HepG2 (cell line): ENCODE measurements at regions of chr4 and their contacts with region 1.

Region 1: GRCh38 chr4:118034053-118034785 is at the start of gene NDST3:
- DNase-seq: peak; percentile 32
- ATAC-seq: peak; percentile 61
- H3K4me3 ChIP-seq: peak within 1 kb of the TSS; percentile 26 to 63 (median 31); a peak in 4 of 6 replicates
- H3K27ac ChIP-seq: no peak within 1 kb of the TSS
- H3K4me1 ChIP-seq: no peaks in the 10 kb centered on the region
- H3K27me3 ChIP-seq: peaks cover 1 to 19% of the 10 kb centered on the region in 2 experiments; a peak in 3 of 5 replicates
- CTCF ChIP-seq: peak; percentile 52
- EP300 ChIP-seq: no peak
- POLR2A ChIP-seq: no peak
- RAD21 ChIP-seq: no peak
- total RNA-seq, gene NDST3: not detected in 2 replicates

Region 2: DNA sequence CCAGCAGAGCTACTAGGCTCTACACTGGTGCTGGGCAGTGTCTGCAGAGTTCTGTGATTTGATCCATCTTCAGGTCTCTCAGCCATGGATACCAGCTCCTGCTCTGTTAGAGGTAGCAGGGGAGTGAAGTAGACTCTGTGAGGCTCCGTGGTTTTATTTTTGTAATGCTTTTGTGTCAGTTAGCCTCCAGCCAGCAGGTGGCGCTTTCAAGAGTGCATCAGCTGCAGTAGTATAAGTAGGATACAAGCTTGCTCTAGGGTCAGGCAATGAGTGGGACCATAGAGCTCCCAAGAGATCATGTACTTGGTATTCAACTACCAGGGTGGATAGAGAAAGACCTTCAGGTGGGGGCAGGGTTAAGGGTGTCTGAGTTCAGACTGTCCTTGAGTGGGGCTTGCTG is 586.3 kb before region 1 on chr4:
- CTCF ChIA-PET with region 1: no interaction called
- POLR2A ChIA-PET with region 1: no interaction called
- in situ Hi-C with region 1: no loop called
- intact Hi-C with region 1: loop called (anchors 5 kb)
- DNase-seq: peak; percentile 12
- ATAC-seq: peak; percentile 62; the same call in 2 of the 3 replicates
- H3K4me3 ChIP-seq: no peak overlapping the region
- H3K27ac ChIP-seq: no peak overlapping the region
- H3K4me1 ChIP-seq: no peaks in the 10 kb centered on the region
- H3K27me3 ChIP-seq: no peaks in the 10 kb centered on the region
- CTCF ChIP-seq: peak; percentile 41
- EP300 ChIP-seq: no peak
- POLR2A ChIP-seq: no peak
- RAD21 ChIP-seq: no peak

Region 3: DNA sequence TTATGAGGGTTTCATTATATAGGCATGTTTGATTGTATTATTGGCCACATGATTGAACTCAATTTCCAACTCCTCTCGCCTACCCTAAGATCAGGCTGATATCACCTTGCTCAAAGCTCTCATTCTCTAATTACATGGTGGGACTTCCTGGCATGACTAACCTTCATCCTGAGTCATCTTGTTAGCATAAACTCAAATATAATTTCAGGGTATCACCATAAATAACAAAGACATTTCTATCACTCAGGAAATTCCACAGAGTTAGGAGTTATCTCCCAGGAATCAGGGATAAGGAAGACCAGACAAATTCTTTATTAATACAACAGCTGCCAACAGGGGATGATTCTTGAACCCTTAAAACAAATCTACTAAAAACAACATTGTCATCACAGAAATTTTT is 90.8 kb after region 1 on chr4:
- CTCF ChIA-PET with region 1: no interaction called
- POLR2A ChIA-PET with region 1: no interaction called
- in situ Hi-C with region 1: no loop called
- intact Hi-C with region 1: no loop called
- DNase-seq: no peak
- ATAC-seq: no peak
- H3K4me3 ChIP-seq: no peak overlapping the region
- H3K27ac ChIP-seq: no peak overlapping the region
- H3K4me1 ChIP-seq: no peaks in the 10 kb centered on the region
- H3K27me3 ChIP-seq: no peaks in the 10 kb centered on the region
- CTCF ChIP-seq: no peak
- EP300 ChIP-seq: no peak
- POLR2A ChIP-seq: no peak
- RAD21 ChIP-seq: no peak

Region 4: GRCh38 chr4:118289794-118290193 is 255.6 kb after region 1 on chr4:
- CTCF ChIA-PET with region 1: no interaction called
- POLR2A ChIA-PET with region 1: no interaction called
- in situ Hi-C with region 1: no loop called
- intact Hi-C with region 1: no loop called
- DNase-seq: no peak
- ATAC-seq: no peak
- H3K4me3 ChIP-seq: no peak overlapping the region
- H3K27ac ChIP-seq: no peak overlapping the region
- H3K4me1 ChIP-seq: no peaks in the 10 kb centered on the region
- H3K27me3 ChIP-seq: 0 out of 5 replicates have a peak, but pooled peaks cover 0 to 1% of the 10 kb centered on the region in 2 experiments
- CTCF ChIP-seq: no peak
- EP300 ChIP-seq: no peak
- POLR2A ChIP-seq: no peak
- RAD21 ChIP-seq: no peak